ENCODE measurements at regions of chr18 and their contacts with region 1.

Region 1: DNA sequence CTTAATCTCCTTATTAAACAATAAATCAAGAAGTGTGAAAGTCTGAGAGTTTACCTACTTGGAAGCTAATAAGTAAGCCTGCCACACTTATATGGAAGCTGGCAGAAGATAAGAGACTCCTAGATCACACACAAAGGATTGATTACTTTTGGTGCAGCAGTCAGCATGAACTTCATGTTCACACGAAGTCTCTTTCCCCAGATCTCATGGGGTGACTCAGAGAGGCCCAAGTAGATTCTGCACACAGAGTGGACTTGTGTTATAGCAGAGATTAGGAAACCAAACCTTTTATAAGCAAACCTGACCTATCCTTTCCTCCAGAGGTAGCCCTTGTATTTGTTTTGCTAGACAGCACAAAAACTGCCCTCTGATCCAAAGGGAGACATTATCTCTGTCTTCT is 9.9 kb upstream of the GAREM1 start:
- DNase-seq: no peak
- ATAC-seq: peak in 1 of 4 donors; percentile 46
- H3K4me3 ChIP-seq: no peak overlapping the region
- H3K27ac ChIP-seq: no peak overlapping the region
- H3K4me1 ChIP-seq: no peaks in the 10 kb centered on the region
- H3K27me3 ChIP-seq: no peaks in the 10 kb centered on the region
- CTCF ChIP-seq: no peak

Region 2: DNA sequence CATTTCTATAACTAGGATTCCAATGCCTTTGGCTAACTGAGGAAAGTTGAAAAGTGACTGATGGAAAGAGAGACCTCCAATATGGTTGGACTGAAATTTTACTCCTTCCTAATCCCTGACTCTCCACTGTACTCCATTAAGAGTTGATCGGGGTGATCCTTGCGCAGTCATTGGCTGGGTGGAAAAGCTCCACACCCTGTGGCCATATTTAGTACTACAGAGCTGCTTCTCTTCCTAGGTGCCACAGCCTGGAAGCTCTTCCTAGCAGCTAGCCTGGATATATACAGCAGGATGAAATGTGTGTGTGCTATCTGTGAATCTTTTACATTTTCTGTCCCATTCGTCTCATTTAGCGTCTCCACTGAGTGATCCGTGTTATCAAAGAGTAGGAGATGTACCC is 219.6 kb before region 1 on chr18:
- intact Hi-C with region 1: no loop called
- DNase-seq: no peak
- ATAC-seq: peak in 1 of 4 donors; percentile 39
- H3K4me3 ChIP-seq: no peak overlapping the region
- H3K27ac ChIP-seq: no peak overlapping the region
- H3K4me1 ChIP-seq: no peaks in the 10 kb centered on the region
- H3K27me3 ChIP-seq: no peaks in the 10 kb centered on the region
- CTCF ChIP-seq: no peak

Region 3: DNA sequence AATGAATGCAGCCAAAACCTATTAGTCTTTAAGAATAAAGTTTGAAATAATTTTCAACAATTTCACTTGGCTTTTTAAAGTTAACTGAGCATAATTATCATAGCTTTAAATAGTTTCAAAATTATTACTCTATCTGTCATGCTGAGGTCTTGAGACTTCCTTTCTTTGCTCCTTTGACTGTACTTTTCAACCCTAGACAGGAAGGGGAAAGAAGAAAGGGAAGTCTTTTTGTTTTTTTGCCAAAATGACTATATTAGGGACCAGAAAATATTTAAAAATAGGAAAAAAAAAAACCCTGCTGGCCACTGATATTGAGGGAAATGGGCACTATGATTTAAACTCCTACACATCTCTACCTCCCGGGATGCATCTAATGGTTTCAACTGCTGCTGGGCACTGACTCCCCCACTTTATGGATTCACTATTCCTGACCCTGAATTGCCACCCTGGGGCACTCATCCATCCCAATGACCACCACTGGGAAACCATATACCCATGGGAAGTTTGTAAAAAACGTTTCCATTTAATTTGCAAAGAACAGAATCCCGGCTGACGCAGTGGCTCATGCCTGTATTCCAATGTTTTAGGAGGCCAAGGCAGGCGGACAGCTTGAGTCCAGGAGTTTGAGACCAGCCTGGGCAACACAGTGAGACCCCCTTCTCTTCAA is 60.4 kb before region 1 on chr18:
- intact Hi-C with region 1: no loop called
- DNase-seq: no peak
- ATAC-seq: peak in 1 of 4 donors; percentile 42
- H3K4me3 ChIP-seq: no peak overlapping the region
- H3K27ac ChIP-seq: no peak overlapping the region
- H3K4me1 ChIP-seq: peaks cover 5 to 11% (median 6%) of the 10 kb centered on the region in 3 donors
- H3K27me3 ChIP-seq: no peaks in the 10 kb centered on the region
- CTCF ChIP-seq: no peak

Region 4: GRCh38 chr18:32530947-32531651 is 50.5 kb after region 1 on chr18:
- intact Hi-C with region 1: loop called in 1 of 3 experiments (anchors 10 kb)
- DNase-seq: no peak
- ATAC-seq: peak in 1 of 4 donors; percentile 45
- H3K4me3 ChIP-seq: no peak overlapping the region
- H3K27ac ChIP-seq: no peak overlapping the region
- H3K4me1 ChIP-seq: no peaks in the 10 kb centered on the region
- H3K27me3 ChIP-seq: no peaks in the 10 kb centered on the region
- CTCF ChIP-seq: no peak

Region 5: DNA sequence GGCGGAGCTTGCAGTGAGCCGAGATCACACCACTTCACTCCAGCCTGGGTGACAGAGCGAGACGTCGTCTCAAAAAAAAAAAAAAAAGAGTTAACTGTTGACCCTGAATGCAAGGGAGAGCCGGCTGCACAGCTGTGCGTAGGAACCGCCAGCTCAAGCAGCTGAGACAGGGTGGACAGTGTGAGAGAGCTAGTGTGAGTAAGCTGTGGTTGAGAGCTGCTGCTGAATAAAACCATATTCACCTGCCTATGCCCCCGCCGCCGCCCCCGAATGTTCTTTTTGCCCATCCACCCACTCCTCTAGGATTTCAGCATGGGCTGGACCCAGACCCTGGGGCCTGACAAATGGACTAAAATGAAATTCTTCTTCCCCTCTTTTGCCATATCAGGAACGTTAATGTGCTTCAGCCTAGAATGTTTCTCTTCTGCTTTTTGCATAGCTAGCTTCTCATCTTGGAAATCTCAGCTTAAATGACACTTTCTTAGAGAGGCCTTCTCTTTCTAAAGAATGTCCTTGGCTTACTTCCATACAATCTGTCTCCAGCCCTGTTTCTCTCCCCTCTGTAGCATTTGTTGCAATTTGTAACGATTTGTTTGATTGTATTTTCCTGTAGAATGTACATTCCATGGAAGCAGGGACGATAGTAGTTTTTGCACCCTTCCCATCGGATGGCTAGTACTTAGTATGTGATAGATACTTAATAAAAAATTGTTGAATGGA is 149.6 kb after region 1 on chr18:
- intact Hi-C with region 1: no loop called
- DNase-seq: no peak
- ATAC-seq: no peak
- H3K4me3 ChIP-seq: no peak overlapping the region
- H3K27ac ChIP-seq: no peak overlapping the region
- H3K4me1 ChIP-seq: no peaks in the 10 kb centered on the region
- H3K27me3 ChIP-seq: no peaks in the 10 kb centered on the region
- CTCF ChIP-seq: no peak

Measured in pancreas (tissue), 10 donors.